Left colon (tissue), 2 donors: ENCODE measurements at regions of chr4 and their contacts with region 1.

Region 1: GRCh38 chr4:153573881-153574802 is 108.0 kb downstream of the TMEM131L start:
- DNase-seq: peak; percentile 51 to 79
- ATAC-seq: peak; percentile 90

Region 2: GRCh38 chr4:153023681-153024394 is 550.3 kb before region 1 on chr4:
- intact Hi-C with region 1: no loop called
- DNase-seq: peak in 1 of 2 donors; percentile 31
- ATAC-seq: peak; percentile 64

Region 3: DNA sequence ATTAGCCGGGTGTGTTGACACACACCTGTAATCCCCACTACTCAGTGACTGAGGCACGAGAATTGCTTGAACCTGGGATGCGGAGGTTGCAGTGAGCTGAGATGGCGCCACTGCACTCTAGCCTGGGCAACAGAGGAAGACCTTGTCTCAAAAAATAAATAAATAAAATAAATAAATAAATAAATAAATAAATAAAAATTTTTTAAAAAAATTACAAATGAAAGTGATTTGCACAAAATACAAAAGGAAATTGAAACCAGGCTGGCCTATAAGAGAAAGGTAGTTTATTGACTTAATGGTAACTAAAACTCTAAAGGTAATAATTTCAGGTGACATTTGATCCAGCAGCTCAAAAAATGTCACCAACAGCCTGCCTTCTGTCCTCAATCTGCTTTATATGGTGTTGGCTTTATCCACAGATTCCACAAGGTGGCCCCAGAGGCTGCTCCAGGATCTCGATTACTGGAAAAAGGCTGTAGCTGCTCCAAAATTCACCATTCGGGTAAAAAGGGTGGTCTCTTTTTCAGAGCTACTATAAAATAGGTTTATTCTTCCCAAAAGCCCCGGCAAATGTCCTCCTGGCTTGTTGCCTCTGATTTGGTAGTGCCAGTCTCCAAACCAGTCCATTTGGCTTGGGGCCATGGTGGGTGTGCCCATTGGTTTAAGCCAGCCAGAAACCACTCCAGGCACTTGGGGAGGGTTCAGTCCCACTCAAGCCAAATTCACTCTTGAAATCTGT is 431.3 kb before region 1 on chr4:
- intact Hi-C with region 1: loop called in 1 of 2 experiments (anchors 5 kb)
- DNase-seq: peak; percentile 79 to 91
- ATAC-seq: peak; percentile 78

Region 4: DNA sequence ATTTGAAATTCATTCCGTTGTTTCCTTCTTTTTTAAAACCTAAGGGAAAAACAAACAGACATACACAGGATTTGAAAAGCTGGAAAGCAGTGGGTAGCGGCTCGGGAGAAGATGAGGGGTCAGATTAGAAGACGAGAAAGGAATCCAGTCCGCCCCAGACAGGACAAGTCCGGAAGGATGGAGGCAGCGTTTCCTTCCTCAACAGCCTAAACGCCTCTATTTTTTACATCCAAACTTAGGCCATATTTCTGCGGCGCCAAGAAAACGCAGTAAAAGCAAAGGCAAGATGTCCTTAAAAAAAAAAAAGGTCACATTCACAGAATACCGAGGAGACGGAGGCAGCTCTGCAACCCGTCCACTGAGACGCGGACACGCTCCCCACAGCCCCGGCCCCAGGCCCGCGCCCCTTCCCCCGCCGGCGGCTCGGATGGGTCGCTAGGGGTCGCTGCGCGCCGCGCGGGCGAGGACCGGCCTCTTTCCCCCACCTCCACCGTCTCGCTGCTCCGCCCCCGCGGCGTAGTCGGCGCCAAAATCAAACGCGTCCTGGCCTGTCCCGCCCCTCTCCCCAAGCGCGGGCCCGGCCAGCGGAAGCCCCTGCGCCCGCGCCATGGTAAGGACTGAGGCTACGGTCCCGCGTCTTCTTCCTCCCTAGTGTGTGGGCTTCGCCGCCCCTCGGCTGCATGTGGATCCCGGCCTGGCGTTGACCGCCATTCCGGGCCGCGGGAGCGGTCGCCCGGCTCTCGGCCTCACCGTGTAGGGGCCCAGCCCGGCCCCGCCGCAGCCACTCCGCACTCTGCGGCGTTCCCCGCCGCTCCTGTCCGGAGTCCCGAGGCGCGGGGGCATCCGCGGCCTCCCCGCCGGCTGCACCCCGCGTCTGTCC is 229.8 kb before region 1 on chr4 and contains the start of gene MND1:
- intact Hi-C with region 1: loop called (anchors 1 to 10 kb)
- DNase-seq: peak; percentile 79 to 87
- ATAC-seq: peak; percentile 86
- total RNA-seq, gene MND1: 1.5 to 2.5 TPM

Region 5: DNA sequence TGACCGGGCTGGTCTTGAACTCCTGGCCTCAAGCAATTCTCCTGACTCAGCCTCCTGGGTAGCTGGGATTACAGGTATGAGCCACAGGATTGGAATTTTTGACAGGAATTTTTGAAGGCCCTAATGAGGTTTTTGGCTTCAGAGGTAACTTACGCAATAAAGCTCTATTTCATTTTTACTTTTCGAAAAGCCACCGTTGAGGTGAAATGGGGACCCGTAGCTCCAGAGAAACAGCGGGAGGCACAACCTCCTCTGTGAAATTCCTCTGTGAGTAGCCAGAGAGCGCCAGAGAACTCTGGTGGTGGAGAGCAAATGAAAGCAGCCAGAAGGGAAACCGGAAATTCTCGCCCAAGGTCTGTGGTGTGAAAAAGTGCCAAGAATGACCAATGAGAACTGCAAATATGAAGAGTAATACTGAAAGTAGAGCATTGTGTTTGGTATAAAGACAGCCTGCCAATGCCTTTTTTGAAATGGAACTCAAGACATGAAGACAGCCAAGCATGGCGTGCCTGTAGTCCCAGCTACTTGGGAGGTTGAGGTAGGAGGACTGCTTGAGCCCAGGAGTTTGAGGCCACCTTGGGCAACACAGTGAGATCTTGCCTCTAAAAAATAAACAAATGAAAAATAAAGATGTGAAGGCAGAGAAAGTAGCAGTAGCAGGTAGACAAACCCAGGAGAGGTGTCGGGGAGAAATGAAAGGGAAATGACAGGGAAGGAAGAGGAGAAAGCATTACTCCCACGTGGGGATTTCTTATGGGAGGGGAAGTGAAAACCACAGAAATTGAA is 141.0 kb before region 1 on chr4:
- intact Hi-C with region 1: loop called in 1 of 2 experiments (anchors 10 kb)
- DNase-seq: peak; percentile 61 to 64
- ATAC-seq: peak; percentile 99